Ascending aorta (tissue), 2 donors: ENCODE measurements at regions of chr1 and their contacts with region 1.

Region 1: DNA sequence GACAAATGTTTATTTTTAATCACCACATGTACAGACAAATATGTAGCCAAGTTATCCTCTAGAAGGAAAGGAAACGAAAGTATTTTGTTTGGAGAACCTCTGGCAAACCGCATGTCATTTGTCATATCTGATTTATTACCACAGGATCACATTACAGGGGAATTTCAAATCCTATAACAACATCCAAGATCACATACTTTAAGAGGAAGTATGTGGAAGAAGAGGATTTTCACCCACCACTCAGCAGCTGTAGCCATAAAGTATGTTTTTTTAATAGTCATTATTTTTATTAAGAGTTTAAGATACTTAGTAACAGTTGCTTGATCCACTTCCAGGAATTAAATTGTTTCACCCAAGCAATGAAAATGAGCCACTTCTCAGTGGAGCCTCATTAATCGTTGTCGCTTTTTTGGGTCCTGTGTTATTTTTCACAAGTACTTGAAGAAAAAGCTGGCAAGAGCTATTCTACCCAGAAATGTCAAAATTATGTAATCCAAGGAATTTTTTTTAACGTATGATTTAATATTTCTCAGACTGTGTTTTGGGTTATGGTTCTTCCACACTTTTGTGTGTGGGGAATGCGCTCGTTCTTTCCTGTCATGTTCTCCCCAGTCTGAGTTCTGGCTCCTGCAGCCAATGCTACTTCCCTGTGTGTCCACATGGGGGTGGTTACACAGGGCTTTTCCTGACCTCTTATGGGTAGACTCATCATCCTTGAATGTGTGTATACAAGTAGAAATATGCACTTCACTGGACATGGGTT is 6.9 kb downstream of the SERTAD4 start:
- DNase-seq: peak in 1 of 2 donors; percentile 79
- H3K4me3 ChIP-seq: no peak overlapping the region
- H3K27ac ChIP-seq: peak overlapping the region; percentile 62 to 66
- H3K4me1 ChIP-seq: peaks cover 3 to 55% of the 10 kb centered on the region in 2 donors
- H3K27me3 ChIP-seq: no peaks in the 10 kb centered on the region
- CTCF ChIP-seq: peak in 2 of 3 experiments; percentile 40 to 45

Region 2: DNA sequence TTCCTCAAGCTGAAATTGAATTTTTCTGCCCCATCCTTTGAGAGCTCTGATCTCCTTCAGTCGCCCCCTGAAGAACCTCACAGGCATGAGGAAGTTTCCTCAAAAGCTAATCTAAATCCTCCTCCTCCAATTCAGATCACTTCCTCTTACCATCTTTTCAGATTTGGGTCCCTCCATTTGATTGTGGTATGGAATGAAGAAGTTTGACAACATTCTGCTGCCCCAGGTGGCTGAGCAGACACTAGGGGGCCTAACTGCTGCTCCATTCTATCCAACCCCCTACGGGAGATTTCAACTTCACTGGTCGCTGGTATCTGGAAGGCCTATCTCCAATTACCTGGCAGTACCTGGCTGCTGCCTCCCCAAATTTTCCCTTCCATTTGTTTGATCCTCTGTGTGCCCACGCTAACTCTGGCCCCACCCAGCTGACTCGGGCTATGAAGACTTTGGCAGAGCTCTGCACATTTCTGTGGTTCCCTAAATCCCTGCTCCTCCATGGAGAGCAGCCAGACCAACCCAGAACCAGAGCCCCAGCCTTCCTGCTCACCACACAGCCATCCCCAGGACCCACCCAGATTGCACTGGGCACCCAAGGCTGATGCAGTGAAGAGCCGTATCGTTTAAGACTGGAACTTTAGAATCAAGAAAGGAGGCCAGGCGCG is 441.4 kb before region 1 on chr1:
- intact Hi-C with region 1: no loop called
- DNase-seq: no peak
- H3K4me3 ChIP-seq: no peak overlapping the region
- H3K27ac ChIP-seq: no peak overlapping the region
- H3K4me1 ChIP-seq: peaks cover 0 to 11% of the 10 kb centered on the region in 2 donors
- H3K27me3 ChIP-seq: no peaks in the 10 kb centered on the region
- CTCF ChIP-seq: no peak

Region 3: GRCh38 chr1:210213335-210213734 is 26.2 kb before region 1 on chr1:
- intact Hi-C with region 1: no loop called
- DNase-seq: no peak
- H3K4me3 ChIP-seq: no peak overlapping the region
- H3K27ac ChIP-seq: no peak overlapping the region
- H3K4me1 ChIP-seq: no peaks in the 10 kb centered on the region
- H3K27me3 ChIP-seq: no peaks in the 10 kb centered on the region
- CTCF ChIP-seq: no peak

Region 4: GRCh38 chr1:210262167-210262896 is 22.8 kb after region 1 on chr1:
- intact Hi-C with region 1: loop called (anchors 1 kb)
- DNase-seq: peak in 1 of 2 donors; percentile 76
- H3K4me3 ChIP-seq: peak overlapping the region in 1 of 2 donors; percentile 25
- H3K27ac ChIP-seq: peak overlapping the region; percentile 80 to 84
- H3K4me1 ChIP-seq: peaks cover 13 to 43% of the 10 kb centered on the region in 2 donors
- H3K27me3 ChIP-seq: no peaks in the 10 kb centered on the region
- CTCF ChIP-seq: no peak